Heart right ventricle (tissue), 16 donors: ENCODE measurements at regions of chr18 and their contacts with region 1.

Region 1: GRCh38 chr18:62957885-62958472 is 242.6 kb downstream of the PHLPP1 start:
- DNase-seq: peak in 1 of 2 donors; percentile 46
- ATAC-seq: peak in 7 of 8 donors; percentile 29 to 72 (median 51)
- H3K4me3 ChIP-seq: no peak overlapping the region
- H3K27ac ChIP-seq: no peak overlapping the region
- H3K4me1 ChIP-seq: peaks cover 0 to 16% (median 8%) of the 10 kb centered on the region in 9 donors
- H3K27me3 ChIP-seq: no peaks in the 10 kb centered on the region
- CTCF ChIP-seq: peak in 8 of 9 donors; percentile 33 to 65 (median 56)

Region 2: DNA sequence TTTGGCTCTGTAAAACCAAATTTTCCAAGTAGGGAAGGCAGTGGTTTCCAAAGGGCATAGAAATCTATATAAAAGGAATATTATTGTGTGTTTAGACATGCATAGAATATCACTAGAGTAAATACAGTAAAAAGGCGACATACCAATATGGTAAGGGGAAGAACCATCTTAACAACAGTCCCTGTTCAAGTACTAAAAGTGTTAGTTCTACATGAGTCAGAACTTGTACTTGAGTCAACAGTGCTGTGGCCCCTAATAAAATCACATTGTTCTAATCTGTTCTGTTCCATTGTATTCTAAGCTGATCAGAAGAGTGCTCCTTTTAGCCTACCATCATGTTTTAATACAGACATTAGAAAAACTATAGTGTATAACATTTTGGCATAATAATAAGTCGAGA is 668.9 kb before region 1 on chr18:
- intact Hi-C with region 1: no loop called
- DNase-seq: no peak
- ATAC-seq: no peak
- H3K4me3 ChIP-seq: no peak overlapping the region
- H3K27ac ChIP-seq: no peak overlapping the region
- H3K4me1 ChIP-seq: peaks cover 0 to 40% (median 6%) of the 10 kb centered on the region in 9 donors
- H3K27me3 ChIP-seq: no peaks in the 10 kb centered on the region
- CTCF ChIP-seq: no peak

Region 3: DNA sequence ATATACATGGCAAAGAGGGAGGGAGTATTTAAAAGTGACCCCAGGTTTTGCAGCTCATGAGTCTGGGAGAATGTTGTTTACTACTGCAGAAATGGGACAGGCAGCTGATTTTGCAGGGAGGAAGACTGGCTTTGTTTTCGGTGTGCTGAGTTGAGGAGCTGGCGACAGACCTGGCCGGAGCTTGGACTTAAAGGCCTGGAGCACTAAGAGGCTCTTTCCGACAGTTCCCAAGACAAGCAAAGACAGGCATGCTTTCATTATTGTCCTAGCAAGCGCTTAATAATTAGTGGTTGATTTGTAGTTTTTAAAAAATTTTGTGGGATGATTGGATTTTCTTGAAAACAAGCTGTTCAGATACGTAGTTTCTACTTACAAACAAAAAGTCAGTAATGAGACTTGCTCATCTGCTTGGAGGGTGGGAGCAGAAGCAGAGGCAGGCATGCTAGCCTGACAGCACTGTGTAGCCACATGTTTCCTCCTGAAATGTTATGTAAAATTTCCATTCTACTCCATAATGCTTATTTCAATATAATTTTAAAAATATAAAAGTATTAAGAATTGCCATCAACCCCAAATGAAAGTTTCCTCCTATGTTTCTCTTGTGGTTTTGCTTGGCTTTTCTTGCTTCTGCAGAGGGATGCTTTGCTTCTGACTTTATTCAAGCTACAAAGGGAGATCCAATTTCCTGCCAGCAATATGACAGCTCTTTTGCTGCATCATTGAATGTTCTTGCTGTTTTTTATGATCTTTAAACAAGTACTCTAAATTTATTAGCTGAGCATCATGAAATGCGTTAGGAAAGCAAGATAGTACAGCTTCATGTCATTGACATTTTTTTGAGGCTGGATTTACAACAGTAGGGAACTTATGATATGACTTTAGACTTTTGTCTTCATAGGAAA is 166.9 kb before region 1 on chr18:
- intact Hi-C with region 1: loop called in 1 of 10 experiments (anchors 10 kb)
- DNase-seq: no peak
- ATAC-seq: peak in 3 of 8 donors; percentile 49 to 59 (median 56)
- H3K4me3 ChIP-seq: peak overlapping the region in 3 of 10 donors; percentile 5 to 27 (median 12)
- H3K27ac ChIP-seq: peak overlapping the region in 2 of 10 donors; percentile 2 to 20
- H3K4me1 ChIP-seq: peaks cover 0 to 45% (median 13%) of the 10 kb centered on the region in 9 donors
- H3K27me3 ChIP-seq: no peaks in the 10 kb centered on the region
- CTCF ChIP-seq: no peak

Region 4: DNA sequence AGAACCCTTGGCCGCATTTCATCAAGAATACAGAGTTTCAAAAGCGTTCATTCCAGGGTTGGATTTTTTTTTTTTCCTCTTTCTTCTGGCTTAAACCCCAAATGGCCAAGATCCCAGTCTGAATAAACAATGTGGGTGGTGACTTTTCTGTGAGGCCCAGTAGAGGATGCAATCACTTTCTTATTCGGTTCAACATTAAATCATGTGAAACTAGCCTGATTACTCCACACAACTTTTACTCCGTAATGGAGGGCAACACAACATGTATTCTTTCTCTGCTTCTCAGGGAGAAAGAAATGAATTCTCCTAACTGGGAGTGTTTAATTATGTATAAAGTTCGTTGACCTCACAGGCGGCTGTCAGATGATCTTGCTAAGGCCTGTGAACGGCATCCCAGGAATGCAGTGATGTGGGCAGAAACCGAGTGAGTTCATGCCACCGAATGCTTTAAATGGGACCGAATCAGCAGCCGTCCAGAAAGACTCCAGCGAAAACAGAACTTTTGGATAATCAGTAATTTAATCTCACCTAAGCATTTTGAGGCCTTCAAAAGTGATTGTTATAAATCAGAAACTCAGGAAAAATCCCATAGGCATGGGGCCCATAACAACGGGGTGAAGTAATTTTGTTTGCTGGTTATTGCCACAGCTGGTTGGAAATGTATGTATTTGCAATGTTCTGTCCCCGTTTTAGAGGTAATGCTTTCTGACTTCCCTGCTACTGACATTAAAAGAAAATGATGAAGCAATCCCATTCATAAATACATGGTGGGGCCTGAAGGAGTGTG is 280.1 kb after region 1 on chr18:
- intact Hi-C with region 1: no loop called
- DNase-seq: peak in 1 of 2 donors; percentile 47
- ATAC-seq: peak; percentile 62 to 84 (median 78)
- H3K4me3 ChIP-seq: peak overlapping the region in 4 of 10 donors; percentile 4 to 28 (median 14)
- H3K27ac ChIP-seq: peak overlapping the region; percentile 11 to 89 (median 76)
- H3K4me1 ChIP-seq: peaks cover 5 to 46% (median 25%) of the 10 kb centered on the region in 9 donors
- H3K27me3 ChIP-seq: no peaks in the 10 kb centered on the region
- CTCF ChIP-seq: no peak